Right ventricle myocardium inferior (tissue), 1 donor: ENCODE measurements at regions of chr16 and their contacts with region 1.

Region 1: DNA sequence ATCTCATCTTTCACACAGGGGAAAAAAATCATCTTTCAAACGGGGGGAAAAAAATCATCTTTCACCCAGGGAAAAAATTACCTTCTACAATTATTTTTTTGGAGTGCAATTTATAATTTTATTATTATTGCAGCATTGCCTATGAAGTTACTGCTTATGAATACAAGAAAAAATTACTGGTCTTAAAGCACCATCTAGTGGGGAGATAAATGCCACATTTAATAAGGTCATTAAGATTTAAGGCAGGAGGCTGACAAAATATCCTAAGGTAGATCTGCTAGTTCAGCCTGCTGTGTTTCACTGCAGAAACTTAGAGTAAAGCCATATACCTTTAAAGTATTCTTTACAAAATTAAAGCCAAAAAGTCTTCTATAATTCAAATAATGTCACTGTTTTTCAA is 13.7 kb downstream of the SHCBP1 start:
- DNase-seq: no peak
- ATAC-seq: no peak

Region 2: GRCh38 chr16:46555951-46556350 is 51.6 kb before region 1 on chr16:
- intact Hi-C with region 1: loop called (anchors 1 kb)
- DNase-seq: no peak
- ATAC-seq: no peak